Left cardiac atrium (tissue), 4 donors: ENCODE measurements at regions of chr1 and their contacts with region 1.

Region 1: DNA sequence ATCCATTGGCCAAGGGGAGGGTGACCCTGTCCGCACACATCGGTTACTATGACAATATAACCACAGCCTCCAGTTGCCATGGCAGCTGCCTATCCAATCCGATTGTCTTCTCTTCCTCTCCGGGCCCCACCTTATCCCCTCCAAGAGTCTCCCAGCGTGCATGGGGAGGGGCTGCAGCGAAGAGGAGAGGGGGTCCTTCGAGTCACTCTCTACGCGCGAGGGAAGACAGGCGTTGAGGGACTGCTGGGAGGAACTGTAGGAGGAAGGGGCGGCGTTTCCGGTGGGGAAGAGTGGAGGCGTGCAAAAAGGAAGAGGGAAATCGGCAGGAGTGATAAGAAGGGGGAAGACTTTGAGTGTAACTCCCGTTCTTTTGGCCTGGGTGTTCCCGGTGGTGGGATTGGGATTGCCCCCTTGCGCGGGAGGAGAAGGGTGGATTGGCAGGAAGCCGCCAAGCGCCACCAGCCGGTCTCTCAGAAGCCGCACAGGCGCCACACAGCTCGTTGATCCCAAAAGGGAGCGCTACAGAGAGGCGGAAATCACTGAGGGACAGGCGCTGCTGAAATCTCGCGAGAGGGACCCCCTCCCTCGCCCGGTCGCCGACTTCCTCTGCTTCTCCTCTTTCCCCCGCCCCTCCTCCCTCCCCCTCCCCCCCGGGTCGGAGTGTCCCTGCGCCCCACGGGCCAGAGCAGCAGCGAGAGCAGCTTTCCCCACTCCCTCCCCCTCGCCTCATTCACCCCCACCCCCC is 384 bp upstream of the SMG7 start:
- DNase-seq: peak; percentile 97
- ATAC-seq: peak; percentile 88

Region 2: GRCh38 chr1:183306317-183307042 is 165.4 kb before region 1 on chr1:
- intact Hi-C with region 1: no loop called
- DNase-seq: no peak
- ATAC-seq: peak; percentile 7 to 33

Region 3: GRCh38 chr1:183622884-183623785 is 151.2 kb after region 1 on chr1:
- intact Hi-C with region 1: loop called in 1 of 2 experiments (anchors 10 kb)
- DNase-seq: peak; percentile 29
- ATAC-seq: peak; percentile 88 to 93